AG04449 (cell line): ENCODE measurements at regions of chr19 and their contacts with region 1.

Region 1: GRCh38 chr19:4896372-4896771 is 6.3 kb downstream of the ARRDC5 start:
- DNase-seq: no peak
- H3K4me3 ChIP-seq: no peak overlapping the region
- CTCF ChIP-seq: no peak

Region 2: GRCh38 chr19:4647676-4648644 is 248.4 kb before region 1 on chr19:
- CTCF ChIA-PET with region 1: no interaction called
- POLR2A ChIA-PET with region 1: no interaction called
- DNase-seq: no peak
- H3K4me3 ChIP-seq: no peak overlapping the region
- CTCF ChIP-seq: no peak

Region 3: DNA sequence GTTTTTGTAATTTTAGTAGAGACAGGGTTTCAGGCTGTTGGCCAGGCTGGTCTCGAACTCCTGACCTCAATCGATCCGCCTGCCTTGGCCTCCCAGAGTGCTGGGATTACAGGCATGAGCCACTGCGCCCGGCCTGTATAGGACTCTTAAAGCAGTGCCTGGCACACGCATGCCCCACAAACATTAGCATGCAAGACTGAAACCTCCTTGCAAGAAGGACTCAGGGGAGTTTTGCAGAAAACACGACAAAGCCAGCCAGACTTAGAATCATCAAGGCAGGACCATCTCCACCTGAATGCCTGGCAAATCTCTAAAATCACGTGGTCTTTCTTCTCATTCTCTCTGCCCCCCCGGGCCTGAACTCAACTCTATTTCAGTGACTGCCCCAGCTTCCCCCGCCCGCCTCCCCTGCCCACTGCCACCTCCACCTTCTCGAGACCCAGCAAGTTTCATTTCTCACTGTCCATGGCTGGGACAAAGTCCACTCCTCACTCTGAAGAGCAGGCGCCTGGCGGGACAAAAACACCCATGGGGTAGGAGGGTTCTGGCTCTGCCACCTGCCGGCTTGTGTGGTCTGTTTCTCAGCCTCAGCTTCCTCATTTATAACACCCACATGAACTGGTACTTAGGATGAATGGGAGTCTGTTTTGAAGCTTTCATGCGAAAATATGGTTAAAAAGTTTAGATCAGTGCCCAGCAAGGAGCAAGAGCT is 67.2 kb before region 1 on chr19:
- CTCF ChIA-PET with region 1: no interaction called
- POLR2A ChIA-PET with region 1: no interaction called
- DNase-seq: no peak
- H3K4me3 ChIP-seq: peak overlapping the region; percentile 12
- CTCF ChIP-seq: no peak

Region 4: DNA sequence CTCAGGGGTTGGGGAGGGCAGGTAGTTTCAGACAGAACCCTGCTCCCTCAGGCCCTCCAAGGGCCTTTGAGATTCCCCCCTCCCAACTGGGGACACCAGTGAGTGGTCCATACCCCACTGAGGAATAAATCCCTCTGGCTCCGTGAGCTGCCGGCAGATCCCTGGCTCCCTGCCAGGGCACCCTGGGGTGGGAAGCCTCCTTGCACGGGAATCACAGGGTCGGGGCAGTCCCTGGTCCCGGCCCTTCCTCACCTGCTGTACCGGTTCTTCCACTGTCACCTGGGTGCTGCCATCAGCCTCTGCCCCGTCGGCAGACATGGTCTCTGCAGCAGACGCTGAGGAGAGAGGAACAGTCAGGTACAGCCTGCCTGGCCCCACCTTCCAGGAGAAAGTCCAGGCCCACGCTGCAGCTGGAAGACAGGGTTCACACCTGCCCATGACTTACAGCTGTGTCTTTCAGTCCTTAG is 35.3 kb before region 1 on chr19:
- CTCF ChIA-PET with region 1: no interaction called
- POLR2A ChIA-PET with region 1: no interaction called
- DNase-seq: no peak
- H3K4me3 ChIP-seq: no peak overlapping the region
- CTCF ChIP-seq: no peak

Region 5: DNA sequence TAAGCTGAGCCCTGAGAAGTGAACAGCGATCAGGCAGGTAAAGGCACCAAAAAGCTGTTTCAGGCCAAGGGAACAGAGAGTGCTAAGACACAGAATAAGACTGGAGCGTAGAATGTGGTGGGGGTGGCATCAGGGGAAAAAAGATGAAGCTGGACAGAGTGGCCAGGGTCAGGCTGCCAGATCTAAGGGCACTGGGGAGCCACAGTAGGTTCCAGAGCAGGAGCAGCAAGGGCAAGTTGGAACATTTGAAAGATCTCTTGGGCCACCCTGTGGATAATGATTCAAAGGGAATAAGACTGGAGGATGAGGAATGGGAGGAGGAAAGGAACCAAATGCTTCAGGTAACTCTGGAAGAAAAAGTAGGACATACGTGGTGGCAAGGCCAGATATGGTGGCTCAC is 22.4 kb before region 1 on chr19:
- CTCF ChIA-PET with region 1: interaction called, 19 read pairs
- POLR2A ChIA-PET with region 1: no interaction called
- DNase-seq: no peak
- H3K4me3 ChIP-seq: no peak overlapping the region
- CTCF ChIP-seq: no peak